Heart left ventricle (tissue), 16 donors: ENCODE measurements at regions of chr5 and their contacts with region 1.

Region 1: GRCh38 chr5:101084353-101084752 is 181.3 kb upstream of the ST8SIA4 start:
- DNase-seq: no peak
- ATAC-seq: no peak
- H3K4me3 ChIP-seq: no peak overlapping the region
- H3K27ac ChIP-seq: no peak overlapping the region
- H3K4me1 ChIP-seq: peaks cover 0 to 12% (median 1%) of the 10 kb centered on the region in 12 donors
- H3K27me3 ChIP-seq: no peaks in the 10 kb centered on the region
- CTCF ChIP-seq: no peak
- POLR2A ChIP-seq: no peak

Region 2: GRCh38 chr5:100772548-100772947 is 311.8 kb before region 1 on chr5:
- intact Hi-C with region 1: no loop called
- DNase-seq: no peak
- ATAC-seq: no peak
- H3K4me3 ChIP-seq: no peak overlapping the region
- H3K27ac ChIP-seq: no peak overlapping the region
- H3K4me1 ChIP-seq: peaks cover 0 to 15% (median 0%) of the 10 kb centered on the region in 12 donors
- H3K27me3 ChIP-seq: no peaks in the 10 kb centered on the region
- CTCF ChIP-seq: no peak
- POLR2A ChIP-seq: no peak

Region 3: DNA sequence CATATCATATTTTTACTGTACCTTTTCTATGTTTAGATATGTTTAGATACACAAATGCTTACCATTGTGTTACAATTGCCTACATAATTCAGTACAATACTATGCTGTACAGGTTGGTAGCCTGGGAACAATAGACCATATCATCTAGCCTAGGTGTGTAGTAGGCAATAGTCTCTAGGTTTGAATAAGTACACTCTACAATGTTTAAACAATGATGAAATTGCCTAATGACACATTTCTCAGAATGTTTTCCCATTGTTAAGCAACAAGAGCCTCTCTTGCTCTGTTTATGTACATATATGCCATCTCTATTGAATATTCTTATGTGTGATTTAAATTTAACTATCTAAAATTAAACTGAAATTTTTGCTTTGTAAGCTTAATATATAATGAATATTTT is 28.3 kb after region 1 on chr5:
- intact Hi-C with region 1: loop called in 1 of 10 experiments (anchors 2 kb)
- DNase-seq: no peak
- ATAC-seq: no peak
- H3K4me3 ChIP-seq: no peak overlapping the region
- H3K27ac ChIP-seq: no peak overlapping the region
- H3K4me1 ChIP-seq: no peaks in the 10 kb centered on the region
- H3K27me3 ChIP-seq: no peaks in the 10 kb centered on the region
- CTCF ChIP-seq: no peak
- POLR2A ChIP-seq: no peak